GM12878 (cell line): ENCODE measurements at regions of chr5 and their contacts with region 1.

Region 1: DNA sequence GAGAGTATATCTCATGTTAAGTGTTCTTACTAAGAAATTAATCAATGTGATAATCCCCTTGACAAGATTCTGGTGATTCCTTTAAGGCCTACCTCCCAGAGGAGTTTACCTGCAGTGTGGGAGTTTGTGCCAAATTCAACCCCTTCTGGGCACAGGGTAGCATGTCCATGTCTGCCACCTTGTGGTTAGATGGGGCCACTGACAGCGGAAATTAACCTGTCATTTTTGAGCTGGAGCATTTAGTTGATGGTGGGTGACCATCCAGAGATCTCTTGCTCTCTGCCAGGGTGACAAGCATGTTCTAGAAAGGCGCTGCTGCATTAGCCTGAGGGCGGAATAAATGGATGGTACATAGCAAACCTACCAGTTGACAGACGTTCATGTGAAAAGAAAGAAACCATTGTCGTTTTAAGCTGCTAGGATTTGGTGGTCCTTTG is 132.2 kb downstream of the FBXO4 start:
- DNase-seq: peak; percentile 20
- ATAC-seq: peak; percentile 96
- H3K4me3 ChIP-seq: no peak overlapping the region
- H3K27ac ChIP-seq: no peak overlapping the region
- H3K4me1 ChIP-seq: no peaks in the 10 kb centered on the region
- H3K27me3 ChIP-seq: no peaks in the 10 kb centered on the region
- CTCF ChIP-seq: peak; percentile 81 to 89 (median 82)
- EP300 ChIP-seq: no peak
- POLR2A ChIP-seq: no peak
- RAD21 ChIP-seq: peak; percentile 82

Region 2: DNA sequence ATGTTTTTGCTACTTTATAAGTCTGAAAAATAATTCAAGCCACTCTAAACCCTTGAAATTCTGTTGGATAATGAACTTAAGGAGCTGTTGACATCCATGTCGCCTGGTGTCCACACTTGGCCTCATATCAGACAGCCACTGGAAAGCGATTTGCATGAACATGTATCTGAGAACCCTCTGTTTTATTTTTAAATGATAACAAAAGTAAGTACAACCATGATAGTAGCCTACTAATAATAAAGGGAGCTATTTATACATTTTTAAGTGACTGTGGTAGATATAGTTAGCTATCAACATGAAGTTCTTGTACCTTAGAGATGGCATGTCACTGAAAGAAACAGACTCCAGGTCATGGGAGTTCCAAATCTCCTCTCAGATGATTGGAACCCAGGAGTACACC is 600.2 kb before region 1 on chr5:
- CTCF ChIA-PET with region 1: no interaction called
- POLR2A ChIA-PET with region 1: no interaction called
- RAD21 ChIA-PET with region 1: no interaction called
- SMC1A ChIA-PET with region 1: no interaction called
- in situ Hi-C with region 1: no loop called
- intact Hi-C with region 1: no loop called
- DNase-seq: no peak
- ATAC-seq: no peak
- H3K4me3 ChIP-seq: no peak overlapping the region
- H3K27ac ChIP-seq: no peak overlapping the region
- H3K4me1 ChIP-seq: no peaks in the 10 kb centered on the region
- H3K27me3 ChIP-seq: no peaks in the 10 kb centered on the region
- CTCF ChIP-seq: no peak
- EP300 ChIP-seq: no peak
- POLR2A ChIP-seq: no peak
- RAD21 ChIP-seq: no peak

Region 3: GRCh38 chr5:41843456-41844370 is 213.6 kb before region 1 on chr5:
- CTCF ChIA-PET with region 1: interaction called, 8 read pairs
- POLR2A ChIA-PET with region 1: no interaction called
- RAD21 ChIA-PET with region 1: interaction called, 16 read pairs
- SMC1A ChIA-PET with region 1: interaction called, 16 read pairs
- in situ Hi-C with region 1: no loop called
- intact Hi-C with region 1: no loop called
- DNase-seq: no peak
- ATAC-seq: peak; percentile 89
- H3K4me3 ChIP-seq: no peak overlapping the region
- H3K27ac ChIP-seq: no peak overlapping the region; the same call in 1 of the 2 replicates
- H3K4me1 ChIP-seq: peaks cover 11% of the 10 kb centered on the region
- H3K27me3 ChIP-seq: no peaks in the 10 kb centered on the region
- CTCF ChIP-seq: peak; percentile 68 to 83 (median 73)
- EP300 ChIP-seq: no peak
- POLR2A ChIP-seq: no peak
- RAD21 ChIP-seq: peak; percentile 94

Region 4: DNA sequence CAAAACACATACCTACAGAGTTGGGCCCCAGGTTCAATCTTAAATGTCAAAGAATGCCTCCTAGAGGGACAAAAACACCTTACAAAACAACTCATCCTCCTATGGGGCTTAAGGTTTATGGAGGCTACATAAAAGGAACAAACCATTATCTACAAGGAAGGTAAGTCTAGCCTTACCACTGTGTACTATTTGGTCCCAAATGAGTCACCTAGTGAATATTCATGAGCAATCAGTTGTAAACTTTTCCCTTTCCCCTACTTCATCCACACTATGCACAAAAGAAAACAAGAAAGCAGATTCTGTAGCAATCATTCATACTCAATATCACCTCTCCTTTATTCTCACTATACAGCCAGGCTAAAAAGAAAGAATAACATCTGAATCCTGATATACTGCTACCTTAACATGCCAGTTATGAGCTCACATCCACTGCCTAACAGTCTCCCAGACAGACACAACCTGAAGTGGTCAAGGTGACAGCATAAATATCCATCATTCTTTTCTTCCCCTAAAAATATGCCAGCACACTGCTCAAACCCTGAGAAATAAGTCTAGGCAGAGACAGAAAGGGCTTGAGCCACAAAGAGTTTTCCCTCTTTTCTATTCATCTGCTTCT is 193.3 kb before region 1 on chr5:
- CTCF ChIA-PET with region 1: interaction called, 300 read pairs
- POLR2A ChIA-PET with region 1: no interaction called
- RAD21 ChIA-PET with region 1: interaction called, 16 read pairs
- SMC1A ChIA-PET with region 1: interaction called, 172 read pairs
- in situ Hi-C with region 1: loop called (anchors 5 kb)
- intact Hi-C with region 1: no loop called
- DNase-seq: no peak
- ATAC-seq: peak; percentile 81
- H3K4me3 ChIP-seq: no peak overlapping the region
- H3K27ac ChIP-seq: no peak overlapping the region
- H3K4me1 ChIP-seq: no peaks in the 10 kb centered on the region; the same call in 1 of the 2 replicates
- H3K27me3 ChIP-seq: no peaks in the 10 kb centered on the region
- CTCF ChIP-seq: no peak
- EP300 ChIP-seq: no peak
- POLR2A ChIP-seq: no peak
- RAD21 ChIP-seq: no peak

Region 5: GRCh38 chr5:42005561-42006153 is 51.6 kb before region 1 on chr5:
- CTCF ChIA-PET with region 1: interaction called, 29 read pairs
- POLR2A ChIA-PET with region 1: no interaction called
- RAD21 ChIA-PET with region 1: interaction called, 19 read pairs
- SMC1A ChIA-PET with region 1: interaction called, 12 read pairs
- in situ Hi-C with region 1: no loop called
- intact Hi-C with region 1: loop called (anchors 5 kb)
- DNase-seq: no peak
- ATAC-seq: peak; percentile 79
- H3K4me3 ChIP-seq: no peak overlapping the region
- H3K27ac ChIP-seq: no peak overlapping the region
- H3K4me1 ChIP-seq: no peaks in the 10 kb centered on the region
- H3K27me3 ChIP-seq: no peaks in the 10 kb centered on the region
- CTCF ChIP-seq: peak; percentile 48 to 72 (median 66)
- EP300 ChIP-seq: no peak
- POLR2A ChIP-seq: no peak
- RAD21 ChIP-seq: peak; percentile 55

Region 6: DNA sequence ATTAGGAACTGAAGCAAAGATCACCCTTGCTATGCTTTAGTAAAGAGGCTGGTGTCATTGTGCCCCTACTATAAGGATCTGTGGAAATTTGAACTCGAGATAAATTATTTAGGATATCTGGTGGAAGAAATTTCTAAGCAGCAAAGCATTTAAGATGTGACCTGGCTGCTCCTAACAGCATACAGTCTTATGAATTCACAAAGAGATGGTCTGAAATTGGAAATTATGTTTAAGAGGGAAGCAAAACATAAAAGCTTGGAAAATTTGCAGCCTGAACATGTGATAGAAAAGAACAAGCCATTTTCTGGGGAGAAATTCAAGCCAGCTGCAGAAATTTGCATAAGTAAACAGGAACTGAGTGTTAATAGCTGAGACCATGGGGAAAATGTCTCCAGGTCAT is 91.5 kb after region 1 on chr5:
- CTCF ChIA-PET with region 1: no interaction called
- POLR2A ChIA-PET with region 1: no interaction called
- RAD21 ChIA-PET with region 1: no interaction called
- SMC1A ChIA-PET with region 1: no interaction called
- in situ Hi-C with region 1: no loop called
- intact Hi-C with region 1: no loop called
- DNase-seq: no peak
- ATAC-seq: no peak
- H3K4me3 ChIP-seq: no peak overlapping the region
- H3K27ac ChIP-seq: no peak overlapping the region
- H3K4me1 ChIP-seq: no peaks in the 10 kb centered on the region
- H3K27me3 ChIP-seq: no peaks in the 10 kb centered on the region
- CTCF ChIP-seq: no peak
- EP300 ChIP-seq: no peak
- POLR2A ChIP-seq: no peak
- RAD21 ChIP-seq: no peak

Region 7: GRCh38 chr5:42583322-42583721 is 526.0 kb after region 1 on chr5:
- CTCF ChIA-PET with region 1: interaction called, 13 read pairs
- POLR2A ChIA-PET with region 1: no interaction called
- RAD21 ChIA-PET with region 1: interaction called, 4 read pairs
- SMC1A ChIA-PET with region 1: interaction called, 13 read pairs
- in situ Hi-C with region 1: no loop called
- intact Hi-C with region 1: no loop called
- DNase-seq: peak; percentile 2
- ATAC-seq: peak; percentile 74
- H3K4me3 ChIP-seq: no peak overlapping the region
- H3K27ac ChIP-seq: no peak overlapping the region
- H3K4me1 ChIP-seq: no peaks in the 10 kb centered on the region
- H3K27me3 ChIP-seq: no peaks in the 10 kb centered on the region; a peak in 1 of 4 replicates
- CTCF ChIP-seq: peak; percentile 70 to 89 (median 79)
- EP300 ChIP-seq: no peak
- POLR2A ChIP-seq: no peak
- RAD21 ChIP-seq: peak; percentile 79